ENCODE measurements at regions of chr6 and their contacts with region 1.

Region 1: GRCh38 chr6:11700118-11700718 is 78.4 kb downstream of the ADTRP start:
- DNase-seq: peak; percentile 56
- ATAC-seq: no peak; the same call in 2 of the 3 replicates
- H3K4me3 ChIP-seq: no peak overlapping the region
- H3K27ac ChIP-seq: no peak overlapping the region
- H3K4me1 ChIP-seq: no peaks in the 10 kb centered on the region
- H3K27me3 ChIP-seq: no peaks in the 10 kb centered on the region
- CTCF ChIP-seq: peak; percentile 40
- EP300 ChIP-seq: no peak
- POLR2A ChIP-seq: no peak
- RAD21 ChIP-seq: no peak

Region 2: GRCh38 chr6:11522817-11523605 is 177.2 kb before region 1 on chr6:
- CTCF ChIA-PET with region 1: no interaction called
- POLR2A ChIA-PET with region 1: no interaction called
- in situ Hi-C with region 1: no loop called
- intact Hi-C with region 1: no loop called
- DNase-seq: no peak
- ATAC-seq: no peak; the same call in 2 of the 3 replicates
- H3K4me3 ChIP-seq: no peak overlapping the region
- H3K27ac ChIP-seq: no peak overlapping the region
- H3K4me1 ChIP-seq: no peaks in the 10 kb centered on the region
- H3K27me3 ChIP-seq: peaks cover 0 to 5% of the 10 kb centered on the region in 2 experiments; a peak in 1 of 5 replicates
- CTCF ChIP-seq: no peak
- EP300 ChIP-seq: no peak
- POLR2A ChIP-seq: no peak
- RAD21 ChIP-seq: no peak

Region 3: GRCh38 chr6:11585426-11586016 is 114.7 kb before region 1 on chr6:
- CTCF ChIA-PET with region 1: no interaction called
- POLR2A ChIA-PET with region 1: no interaction called
- in situ Hi-C with region 1: no loop called
- intact Hi-C with region 1: loop called (anchors 5 kb)
- DNase-seq: peak; percentile 55
- ATAC-seq: peak; percentile 62
- H3K4me3 ChIP-seq: no peak overlapping the region
- H3K27ac ChIP-seq: no peak overlapping the region
- H3K4me1 ChIP-seq: peaks cover 13% of the 10 kb centered on the region
- H3K27me3 ChIP-seq: no peaks in the 10 kb centered on the region; a peak in 1 of 5 replicates
- CTCF ChIP-seq: peak; percentile 74
- EP300 ChIP-seq: no peak
- POLR2A ChIP-seq: no peak
- RAD21 ChIP-seq: peak; percentile 51; the same call in 1 of the 2 replicates

Region 4: DNA sequence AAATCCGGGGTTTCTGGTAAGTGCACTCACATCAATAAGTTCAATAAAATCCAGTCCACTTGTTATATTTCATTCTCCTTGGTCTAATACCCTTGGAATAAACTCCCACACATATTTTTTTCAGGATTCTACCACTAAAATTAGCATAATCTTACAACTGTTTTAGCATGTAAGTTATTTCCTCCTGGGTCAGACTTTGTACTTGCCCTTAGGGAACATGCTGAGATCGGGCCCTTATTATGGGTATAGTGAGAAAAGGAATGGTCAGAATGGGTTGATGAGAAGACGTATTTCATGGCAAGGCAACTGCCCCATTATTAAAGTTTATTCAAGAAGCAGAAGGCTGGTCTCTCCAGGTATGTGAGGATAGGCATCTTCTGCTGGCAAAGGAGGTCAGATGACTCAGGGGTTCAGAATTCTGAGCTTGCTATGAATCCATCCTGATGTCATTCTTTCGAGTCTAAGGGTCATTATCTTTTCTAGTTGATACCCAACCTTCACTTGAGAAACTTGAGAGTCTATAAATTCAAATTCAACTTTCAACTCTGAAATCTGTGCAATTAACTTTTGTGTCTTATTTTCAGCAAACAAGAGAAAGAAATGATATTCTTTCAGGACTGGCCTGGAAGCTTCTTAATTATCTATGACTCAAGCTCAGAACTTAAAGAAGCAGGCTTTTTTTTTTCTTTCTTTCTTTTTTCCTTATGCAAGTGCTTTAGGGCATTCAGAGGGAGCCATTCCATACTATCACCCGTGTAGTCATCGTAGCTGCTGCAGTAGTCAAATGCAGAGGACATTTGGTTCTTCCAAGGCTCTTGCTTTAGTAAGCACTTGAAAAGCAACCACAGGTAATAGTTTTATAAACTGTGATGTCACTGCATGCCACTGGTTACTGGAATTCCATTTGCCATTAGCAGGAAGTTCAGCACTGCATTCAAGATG is 14.8 kb before region 1 on chr6:
- CTCF ChIA-PET with region 1: no interaction called
- POLR2A ChIA-PET with region 1: no interaction called
- in situ Hi-C with region 1: no loop called
- intact Hi-C with region 1: no loop called
- DNase-seq: peak; percentile 9
- ATAC-seq: no peak
- H3K4me3 ChIP-seq: no peak overlapping the region
- H3K27ac ChIP-seq: no peak overlapping the region
- H3K4me1 ChIP-seq: no peaks in the 10 kb centered on the region
- H3K27me3 ChIP-seq: no peaks in the 10 kb centered on the region; a peak in 1 of 5 replicates
- CTCF ChIP-seq: no peak
- EP300 ChIP-seq: no peak
- POLR2A ChIP-seq: no peak
- RAD21 ChIP-seq: no peak

Region 5: DNA sequence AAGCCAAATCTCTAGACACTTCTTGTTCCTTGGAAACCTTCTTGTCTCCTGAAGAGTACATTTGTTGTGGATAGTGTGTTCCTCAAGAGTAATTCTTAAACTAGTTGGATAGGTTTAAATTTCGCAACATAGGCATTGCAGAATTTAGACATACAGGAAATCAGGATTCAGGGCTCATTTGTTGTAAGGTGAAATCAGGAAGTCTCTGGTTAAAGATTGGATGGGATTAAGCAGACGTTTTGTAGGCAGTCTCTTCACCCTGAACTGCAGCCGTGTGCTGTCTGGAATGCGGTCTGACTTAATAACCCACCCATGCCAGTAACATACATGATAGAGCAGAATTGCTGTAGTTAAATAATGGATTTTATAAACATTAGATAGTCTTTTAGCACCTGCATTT is 333.6 kb after region 1 on chr6:
- CTCF ChIA-PET with region 1: no interaction called
- POLR2A ChIA-PET with region 1: no interaction called
- in situ Hi-C with region 1: no loop called
- intact Hi-C with region 1: loop called (anchors 2 kb)
- DNase-seq: no peak
- ATAC-seq: no peak
- H3K4me3 ChIP-seq: no peak overlapping the region
- H3K27ac ChIP-seq: no peak overlapping the region
- H3K4me1 ChIP-seq: peaks cover 19% of the 10 kb centered on the region
- H3K27me3 ChIP-seq: no peaks in the 10 kb centered on the region
- CTCF ChIP-seq: no peak
- EP300 ChIP-seq: no peak
- POLR2A ChIP-seq: no peak
- RAD21 ChIP-seq: no peak

Region 6: GRCh38 chr6:12075067-12075563 is 374.9 kb after region 1 on chr6:
- CTCF ChIA-PET with region 1: interaction called, 3 read pairs
- POLR2A ChIA-PET with region 1: no interaction called
- in situ Hi-C with region 1: no loop called
- intact Hi-C with region 1: loop called (anchors 1 kb)
- DNase-seq: peak; percentile 9
- ATAC-seq: peak; percentile 59
- H3K4me3 ChIP-seq: no peak overlapping the region
- H3K27ac ChIP-seq: no peak overlapping the region
- H3K4me1 ChIP-seq: peaks cover 7% of the 10 kb centered on the region
- H3K27me3 ChIP-seq: no peaks in the 10 kb centered on the region
- CTCF ChIP-seq: peak; percentile 63
- EP300 ChIP-seq: no peak
- POLR2A ChIP-seq: no peak
- RAD21 ChIP-seq: 0 out of 2 replicates have a peak, but pooled peaks have one; percentile 22

Region 7: DNA sequence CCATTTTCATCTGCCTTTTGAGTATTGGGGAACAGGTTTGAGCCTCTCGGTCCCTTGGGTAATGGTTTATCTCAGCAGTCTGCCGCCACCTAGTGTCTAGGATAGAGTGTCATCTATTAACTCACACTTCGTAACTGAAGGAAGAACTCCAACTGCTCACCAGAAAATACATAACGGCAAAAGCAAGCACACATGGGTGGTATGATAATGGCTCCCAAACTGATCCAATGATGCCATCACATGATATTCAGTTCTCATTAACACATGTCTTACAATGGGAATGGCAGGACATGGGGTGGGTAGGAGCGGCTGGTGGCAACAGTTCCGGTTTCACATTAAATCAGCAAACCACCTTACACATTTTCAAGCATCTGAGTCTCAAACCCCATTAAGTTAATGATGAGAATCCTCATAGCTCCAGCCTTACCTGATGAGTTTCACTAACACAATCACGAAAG is 905.7 kb after region 1 on chr6:
- CTCF ChIA-PET with region 1: interaction called, 10 read pairs
- POLR2A ChIA-PET with region 1: no interaction called
- in situ Hi-C with region 1: no loop called
- intact Hi-C with region 1: loop called (anchors 1 kb)
- DNase-seq: peak; percentile 72
- ATAC-seq: peak; percentile 97
- H3K4me3 ChIP-seq: no peak overlapping the region
- H3K27ac ChIP-seq: no peak overlapping the region
- H3K4me1 ChIP-seq: no peaks in the 10 kb centered on the region
- H3K27me3 ChIP-seq: no peaks in the 10 kb centered on the region
- CTCF ChIP-seq: peak; percentile 93
- EP300 ChIP-seq: no peak
- POLR2A ChIP-seq: no peak
- RAD21 ChIP-seq: peak; percentile 76